ENCODE measurements at regions of chr3 and their contacts with region 1.

Region 1: GRCh38 chr3:193564012-193564411 is 9.3 kb upstream of the ATP13A4 start:
- DNase-seq: peak; percentile 9
- ATAC-seq: peak; percentile 88
- H3K4me3 ChIP-seq: no peak overlapping the region
- H3K27ac ChIP-seq: no peak overlapping the region
- H3K4me1 ChIP-seq: no peaks in the 10 kb centered on the region
- H3K27me3 ChIP-seq: no peaks in the 10 kb centered on the region
- CTCF ChIP-seq: peak; percentile 23
- EP300 ChIP-seq: no peak
- POLR2A ChIP-seq: no peak
- RAD21 ChIP-seq: no peak

Region 2: DNA sequence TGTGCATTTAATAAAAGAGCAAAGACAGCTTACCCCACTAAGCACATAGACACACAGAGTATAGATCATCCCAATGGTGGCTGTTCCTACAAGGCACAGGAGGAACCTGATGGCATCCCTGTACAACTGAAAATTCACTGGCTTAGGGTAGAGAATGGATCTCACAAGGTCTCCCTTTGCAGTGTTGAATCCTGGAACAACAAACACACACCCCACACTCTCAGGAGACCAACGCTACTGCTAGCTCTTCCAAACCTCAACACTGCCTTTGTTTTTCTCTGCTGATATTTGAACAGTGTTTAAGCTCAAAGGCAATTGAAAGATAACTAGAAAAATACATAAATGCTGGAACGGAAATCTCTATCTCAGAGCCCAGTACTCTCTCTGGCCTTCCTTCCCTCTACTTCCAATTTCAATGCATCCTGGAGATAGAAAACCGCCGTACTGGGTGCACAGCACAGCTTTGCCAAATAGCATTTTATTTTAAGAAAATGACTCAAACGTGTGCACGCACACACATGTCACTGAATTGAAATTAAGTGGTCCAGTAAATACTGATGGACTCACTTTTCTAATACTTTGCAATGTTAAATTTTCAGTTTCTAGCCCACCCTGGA is 97.9 kb before region 1 on chr3:
- CTCF ChIA-PET with region 1: no interaction called
- POLR2A ChIA-PET with region 1: no interaction called
- in situ Hi-C with region 1: no loop called
- intact Hi-C with region 1: loop called (anchors 2 kb)
- DNase-seq: no peak
- ATAC-seq: no peak
- H3K4me3 ChIP-seq: no peak overlapping the region
- H3K27ac ChIP-seq: no peak overlapping the region
- H3K4me1 ChIP-seq: no peaks in the 10 kb centered on the region
- H3K27me3 ChIP-seq: no peaks in the 10 kb centered on the region
- CTCF ChIP-seq: no peak
- EP300 ChIP-seq: no peak
- POLR2A ChIP-seq: no peak
- RAD21 ChIP-seq: no peak

Measured in HepG2 (cell line).